Caco-2 (cell line): ENCODE measurements at regions of chr11 and their contacts with region 1.

Region 1: DNA sequence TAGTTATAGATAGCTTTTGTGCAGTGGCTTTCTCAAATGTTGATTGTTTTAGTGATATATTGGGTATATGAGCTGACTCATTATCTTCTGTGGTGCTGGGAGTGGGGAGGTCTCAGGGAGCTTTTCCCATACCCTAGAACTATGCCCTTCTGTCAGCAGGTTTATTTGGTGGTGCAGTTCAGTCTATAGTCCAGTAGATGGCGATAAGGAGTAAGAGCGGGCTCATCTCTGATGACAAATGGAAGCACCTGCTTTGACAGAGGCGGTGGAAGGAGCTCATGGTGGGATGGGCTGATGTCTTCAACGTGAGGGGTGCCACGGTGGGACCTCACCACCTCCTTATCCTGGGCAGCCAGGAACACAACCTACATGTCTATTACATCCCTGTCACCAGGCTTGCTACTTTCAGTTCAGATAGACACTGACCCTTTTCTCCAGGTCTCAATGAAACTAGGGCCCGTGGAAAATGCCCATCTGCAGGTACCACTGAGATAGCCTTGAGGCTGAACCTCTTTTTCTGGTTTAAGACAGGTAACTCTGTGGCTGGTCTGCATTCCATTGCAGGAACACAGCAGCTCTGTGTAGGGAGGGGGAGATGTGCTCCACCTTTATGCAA is 13.0 kb upstream of the OR6A2 start:
- DNase-seq: peak; percentile 42 to 63
- H3K4me3 ChIP-seq: no peak overlapping the region
- H3K4me3 Mint-ChIP-seq: no peak overlapping the region
- H3K27ac Mint-ChIP-seq: no peak overlapping the region
- H3K4me1 ChIP-seq: no peaks in the 10 kb centered on the region
- H3K4me1 Mint-ChIP-seq: no peaks in the 10 kb centered on the region
- H3K27me3 ChIP-seq: no peaks in the 10 kb centered on the region; the same call in 1 of the 2 replicates
- H3K27me3 Mint-ChIP-seq: peaks cover 5% of the 10 kb centered on the region
- CTCF ChIP-seq: peak; percentile 86 to 91

Region 2: GRCh38 chr11:6995703-6996102 is 183.2 kb after region 1 on chr11:
- CTCF ChIA-PET with region 1: no interaction called
- POLR2A ChIA-PET with region 1: no interaction called
- intact Hi-C with region 1: loop called (anchors 5 kb)
- DNase-seq: no peak
- H3K4me3 ChIP-seq: no peak overlapping the region
- H3K4me3 Mint-ChIP-seq: no peak overlapping the region
- H3K27ac Mint-ChIP-seq: no peak overlapping the region
- H3K4me1 ChIP-seq: no peaks in the 10 kb centered on the region
- H3K4me1 Mint-ChIP-seq: no peaks in the 10 kb centered on the region
- H3K27me3 ChIP-seq: no peaks in the 10 kb centered on the region
- H3K27me3 Mint-ChIP-seq: peaks cover 24% of the 10 kb centered on the region
- CTCF ChIP-seq: peak in 1 of 2 experiments; percentile 2